ENCODE measurements at regions of chr19 and their contacts with region 1.

Region 1: DNA sequence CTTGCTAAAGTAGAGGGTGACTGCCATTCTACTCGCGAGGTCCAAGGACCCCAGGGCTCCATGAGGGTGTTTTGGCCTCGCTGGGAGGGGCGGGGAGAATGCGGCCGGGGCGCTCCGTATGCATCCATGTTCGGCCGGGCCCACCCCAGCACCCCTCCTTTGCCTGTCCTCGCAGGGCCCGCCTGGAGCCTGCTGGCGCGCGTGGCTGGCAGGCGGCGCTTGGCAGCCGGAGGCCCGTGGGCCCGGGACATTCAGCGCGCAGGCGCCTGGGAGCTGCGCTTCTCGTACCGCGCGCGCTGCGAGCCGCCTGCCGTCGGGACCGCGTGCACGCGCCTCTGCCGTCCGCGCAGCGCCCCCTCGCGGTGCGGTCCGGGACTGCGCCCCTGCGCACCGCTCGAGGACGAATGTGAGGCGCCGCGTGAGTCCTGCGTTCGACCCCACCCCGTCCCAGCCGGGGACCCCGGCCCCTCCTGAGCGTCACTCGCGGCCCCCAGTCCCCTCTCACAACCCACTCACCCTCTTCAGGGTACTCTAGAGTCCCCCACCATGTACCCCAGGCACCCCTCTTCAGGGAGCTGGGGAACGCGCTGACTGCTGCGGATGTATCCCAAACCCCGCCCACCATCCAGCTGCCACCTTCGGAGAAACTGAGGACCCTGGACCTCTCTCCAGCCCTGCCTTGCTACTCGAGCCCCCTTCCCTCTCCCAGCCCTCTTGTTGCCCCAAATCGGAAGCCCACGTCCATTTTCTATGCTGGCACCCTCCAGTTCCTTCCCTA is 4.1 kb downstream of the DLL3 start:
- DNase-seq: peak; percentile 53
- H3K4me3 ChIP-seq: no peak overlapping the region
- H3K27ac ChIP-seq: no peak overlapping the region
- H3K4me1 ChIP-seq: peaks cover 16% of the 10 kb centered on the region
- H3K27me3 ChIP-seq: peaks cover 16% of the 10 kb centered on the region
- CTCF ChIP-seq: peak; percentile 61 to 67

Region 2: GRCh38 chr19:39212375-39212742 is 290.5 kb before region 1 on chr19:
- CTCF ChIA-PET with region 1: no interaction called
- dilution Hi-C with region 1: no loop called
- in situ Hi-C with region 1: no loop called
- intact Hi-C with region 1: no loop called
- DNase-seq: no peak
- H3K4me3 ChIP-seq: no peak overlapping the region
- H3K27ac ChIP-seq: no peak overlapping the region
- H3K4me1 ChIP-seq: no peaks in the 10 kb centered on the region
- H3K27me3 ChIP-seq: no peaks in the 10 kb centered on the region
- CTCF ChIP-seq: peak in 1 of 2 donors; percentile 32

Region 3: GRCh38 chr19:39397360-39398296 is 105.2 kb before region 1 on chr19:
- CTCF ChIA-PET with region 1: no interaction called
- dilution Hi-C with region 1: loop called (anchors 5 kb)
- in situ Hi-C with region 1: no loop called
- intact Hi-C with region 1: no loop called
- DNase-seq: peak; percentile 75
- H3K4me3 ChIP-seq: no peak overlapping the region
- H3K27ac ChIP-seq: peak overlapping the region; percentile 97
- H3K4me1 ChIP-seq: peaks cover 32% of the 10 kb centered on the region
- H3K27me3 ChIP-seq: no peaks in the 10 kb centered on the region
- CTCF ChIP-seq: peak; percentile 97 to 99

Region 4: GRCh38 chr19:39428283-39429112 is 74.3 kb before region 1 on chr19:
- CTCF ChIA-PET with region 1: no interaction called
- dilution Hi-C with region 1: loop called (anchors 5 kb)
- in situ Hi-C with region 1: no loop called
- intact Hi-C with region 1: no loop called
- DNase-seq: no peak
- H3K4me3 ChIP-seq: no peak overlapping the region
- H3K27ac ChIP-seq: no peak overlapping the region
- H3K4me1 ChIP-seq: no peaks in the 10 kb centered on the region
- H3K27me3 ChIP-seq: no peaks in the 10 kb centered on the region
- CTCF ChIP-seq: no peak

Region 5: DNA sequence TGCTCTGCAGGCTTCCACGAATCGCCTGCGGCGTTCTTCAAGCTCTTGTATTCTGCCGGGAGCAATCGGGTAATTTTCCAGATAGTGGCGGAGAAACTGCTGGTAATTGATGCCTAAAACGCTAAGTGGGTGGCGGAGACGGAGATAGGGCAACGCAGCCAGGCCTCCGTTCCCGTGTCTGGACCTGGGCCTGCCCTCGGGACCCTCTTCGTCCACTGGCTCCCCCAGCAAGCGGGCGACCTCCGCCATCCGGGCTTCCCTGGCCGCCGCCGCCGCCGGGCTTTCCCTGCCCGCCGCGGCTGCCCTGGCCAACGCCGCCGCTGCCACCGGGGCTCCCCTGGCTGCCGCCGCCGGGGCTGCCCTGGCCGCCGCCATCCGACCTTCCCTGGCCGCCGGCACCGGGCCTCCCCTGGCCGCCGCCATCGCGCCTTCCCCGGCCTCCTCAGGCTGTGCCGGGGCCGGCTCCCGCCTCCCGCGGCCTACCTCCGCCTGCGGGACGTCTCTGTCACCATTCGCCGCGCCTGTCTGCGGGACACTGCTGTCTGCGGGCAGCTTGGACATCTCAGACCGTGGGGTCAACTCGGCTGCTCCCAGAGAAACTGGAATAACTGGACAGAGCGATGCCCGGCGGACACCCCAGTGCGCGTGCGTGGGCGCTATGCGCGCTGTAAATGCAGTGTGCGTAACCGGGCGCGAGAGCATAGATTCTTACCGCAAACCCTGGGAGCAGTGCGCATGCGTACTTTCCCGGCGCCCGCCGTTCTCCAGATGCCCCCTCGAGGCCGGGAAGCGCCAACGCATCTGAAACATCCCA is 36.9 kb after region 1 on chr19 and contains the start of gene EID2:
- CTCF ChIA-PET with region 1: no interaction called
- dilution Hi-C with region 1: loop called (anchors 5 kb)
- in situ Hi-C with region 1: no loop called
- intact Hi-C with region 1: no loop called
- DNase-seq: peak; percentile 84
- H3K4me3 ChIP-seq: peak within 1 kb of the TSS; percentile 73 to 90 (median 88)
- H3K27ac ChIP-seq: peak within 1 kb of the TSS; percentile 69
- H3K4me1 ChIP-seq: peaks cover 36% of the 10 kb centered on the region
- H3K27me3 ChIP-seq: no peaks in the 10 kb centered on the region
- CTCF ChIP-seq: peak; percentile 66 to 85
- total RNA-seq, gene EID2: 9.7 to 15.0 TPM

Region 6: GRCh38 chr19:39582891-39583625 is 80.2 kb after region 1 on chr19:
- CTCF ChIA-PET with region 1: no interaction called
- dilution Hi-C with region 1: no loop called
- in situ Hi-C with region 1: no loop called
- intact Hi-C with region 1: no loop called
- DNase-seq: no peak
- H3K4me3 ChIP-seq: no peak overlapping the region
- H3K27ac ChIP-seq: no peak overlapping the region
- H3K4me1 ChIP-seq: no peaks in the 10 kb centered on the region
- H3K27me3 ChIP-seq: no peaks in the 10 kb centered on the region
- CTCF ChIP-seq: no peak

Region 7: GRCh38 chr19:39595950-39596349 is 93.1 kb after region 1 on chr19:
- CTCF ChIA-PET with region 1: no interaction called
- dilution Hi-C with region 1: no loop called
- in situ Hi-C with region 1: no loop called
- intact Hi-C with region 1: no loop called
- DNase-seq: no peak
- H3K4me3 ChIP-seq: no peak overlapping the region
- H3K27ac ChIP-seq: no peak overlapping the region
- H3K4me1 ChIP-seq: no peaks in the 10 kb centered on the region
- H3K27me3 ChIP-seq: peaks cover 1% of the 10 kb centered on the region
- CTCF ChIP-seq: no peak

Measured in mammary epithelial cell (primary cell).